ENCODE measurements at regions of chr17 and their contacts with region 1.

Region 1: DNA sequence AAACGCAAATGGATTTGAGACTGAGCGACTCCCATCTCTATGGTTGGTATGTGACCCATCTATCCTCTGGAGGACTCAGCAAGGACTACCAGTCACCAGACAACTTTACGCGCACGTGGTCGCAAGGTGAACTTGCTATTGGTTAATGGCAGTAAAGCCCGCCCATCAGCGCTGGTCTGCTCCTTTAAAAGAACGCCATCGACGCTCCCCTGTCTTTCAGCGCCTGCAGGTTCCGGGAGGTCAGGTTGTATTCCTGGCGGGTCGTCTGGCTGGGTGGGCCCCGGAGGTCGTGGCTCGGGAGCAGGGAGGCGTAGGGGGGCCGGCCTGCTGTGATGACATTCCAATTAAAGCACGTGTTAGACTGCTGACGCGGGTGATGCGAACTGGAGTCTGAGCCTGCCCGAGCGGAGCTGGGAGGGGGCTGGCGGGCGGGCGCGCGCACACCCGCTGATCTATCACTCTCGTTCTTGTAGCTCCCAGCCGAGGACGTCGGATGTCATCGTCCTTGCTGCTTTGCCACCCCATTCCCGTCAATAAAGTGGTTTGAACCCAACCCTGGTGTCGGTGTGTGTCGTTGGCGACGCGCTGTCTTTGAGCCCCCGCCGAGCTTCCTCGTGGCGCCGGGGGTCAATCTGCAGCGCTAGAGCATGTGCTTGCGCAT is 15.9 kb upstream of the ERN1 start:
- DNase-seq: peak; percentile 100
- H3K4me3 ChIP-seq: peak overlapping the region; percentile 69 to 81 (median 79)
- H3K27ac ChIP-seq: peak overlapping the region; percentile 86 to 96 (median 93)
- H3K4me1 ChIP-seq: peaks cover 18 to 37% (median 24%) of the 10 kb centered on the region in 4 donors
- H3K27me3 ChIP-seq: no peaks in the 10 kb centered on the region
- CTCF ChIP-seq: no peak
- EP300 ChIP-seq: no peak
- POLR2A ChIP-seq: peak; percentile 98

Region 2: DNA sequence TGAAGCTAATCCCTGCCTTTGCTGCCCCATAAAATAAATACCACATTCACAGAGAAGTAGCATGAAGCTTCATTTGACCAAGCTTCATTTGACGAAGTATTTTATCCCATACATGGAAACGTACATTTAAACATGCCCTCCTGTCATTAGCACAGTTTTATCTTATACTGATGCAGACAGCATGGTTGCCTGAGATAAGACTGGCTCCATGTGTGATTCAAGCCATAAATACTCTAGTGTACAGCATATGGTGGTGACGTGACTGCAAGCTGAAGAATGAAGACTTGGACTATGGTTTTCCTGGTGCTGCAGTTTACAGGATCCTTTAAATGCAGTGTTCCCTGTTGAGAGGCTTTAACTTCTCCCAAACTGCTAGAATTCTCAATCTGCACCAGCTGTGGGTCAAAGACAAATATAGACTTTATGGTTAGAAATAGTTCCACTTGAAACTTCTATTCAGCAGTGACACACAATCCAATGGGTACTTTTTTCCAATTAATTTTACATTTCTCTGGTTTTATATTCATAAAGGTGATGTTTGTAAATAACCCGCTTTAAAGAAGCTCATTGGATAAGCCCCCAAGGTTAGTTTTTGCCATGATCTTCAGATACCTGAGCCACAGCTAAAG is 764.7 kb before region 1 on chr17:
- intact Hi-C with region 1: no loop called
- DNase-seq: no peak
- H3K4me3 ChIP-seq: no peak overlapping the region
- H3K27ac ChIP-seq: no peak overlapping the region
- H3K4me1 ChIP-seq: peaks cover 0 to 6% (median 0%) of the 10 kb centered on the region in 4 donors
- H3K27me3 ChIP-seq: no peaks in the 10 kb centered on the region
- CTCF ChIP-seq: no peak
- EP300 ChIP-seq: no peak
- POLR2A ChIP-seq: no peak

Region 3: GRCh38 chr17:64190488-64190887 is 44.6 kb after region 1 on chr17:
- intact Hi-C with region 1: no loop called
- DNase-seq: no peak
- H3K4me3 ChIP-seq: no peak overlapping the region
- H3K27ac ChIP-seq: no peak overlapping the region
- H3K4me1 ChIP-seq: peaks cover 0 to 21% (median 2%) of the 10 kb centered on the region in 4 donors
- H3K27me3 ChIP-seq: no peaks in the 10 kb centered on the region
- CTCF ChIP-seq: no peak
- EP300 ChIP-seq: no peak
- POLR2A ChIP-seq: no peak

Region 4: DNA sequence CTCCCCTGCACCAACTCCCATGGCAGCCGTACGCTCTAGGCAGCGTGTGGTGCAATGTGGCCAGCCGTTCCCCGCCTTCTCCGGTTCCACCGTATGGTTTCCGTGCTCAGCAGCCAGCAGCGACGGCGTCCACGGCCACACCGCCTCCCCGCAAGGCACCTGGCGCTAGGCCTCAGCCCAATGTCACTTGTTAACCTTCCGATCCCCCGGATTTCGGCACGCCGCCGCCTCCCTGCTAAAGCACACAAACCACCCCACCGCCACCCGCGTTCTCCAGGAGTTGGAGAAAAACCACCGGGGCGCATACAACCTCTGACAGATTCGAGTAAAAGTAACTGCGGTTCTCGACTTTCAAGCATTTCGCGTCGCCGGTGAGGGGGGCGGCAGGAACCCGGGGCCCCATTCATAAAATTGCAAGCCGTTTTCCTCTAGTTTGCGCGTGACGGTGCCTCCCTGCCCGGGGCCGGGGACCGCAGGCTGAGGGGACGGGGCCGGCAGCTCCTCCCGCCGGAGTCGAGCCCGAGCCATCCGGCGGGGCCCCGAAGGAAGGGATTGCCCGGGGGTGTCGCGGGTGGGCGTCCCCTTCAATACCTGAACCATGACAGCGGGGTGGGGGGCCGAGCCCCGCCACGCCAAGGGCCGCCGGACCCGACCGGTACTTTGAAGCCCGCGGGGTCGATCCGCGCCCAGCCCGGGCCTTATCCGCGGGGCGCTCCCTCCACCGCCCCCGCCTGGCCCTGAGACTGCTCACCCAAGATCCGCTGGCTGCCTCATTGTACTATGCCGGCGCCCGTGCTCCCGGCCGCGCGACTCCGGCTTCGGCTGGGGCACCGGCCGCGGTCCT is 116.8 kb after region 1 on chr17 and contains the start of gene TEX2:
- intact Hi-C with region 1: loop called (anchors 5 kb)
- DNase-seq: no peak
- H3K4me3 ChIP-seq: peak within 1 kb of the TSS; percentile 95 to 99 (median 97)
- H3K27ac ChIP-seq: peak within 1 kb of the TSS; percentile 92 to 96 (median 96)
- H3K4me1 ChIP-seq: peaks cover 27 to 39% (median 38%) of the 10 kb centered on the region in 4 donors
- H3K27me3 ChIP-seq: no peaks in the 10 kb centered on the region
- CTCF ChIP-seq: no peak
- EP300 ChIP-seq: no peak
- POLR2A ChIP-seq: peak; percentile 77
- total RNA-seq, gene TEX2: 32.6 to 58.7 (median 46.1) TPM

Measured in esophagus muscularis mucosa (tissue), 4 donors.